OCI-LY7 (cell line): ENCODE measurements at regions of chr3 and their contacts with region 1.

Region 1: GRCh38 chr3:195337747-195338146 is 66.8 kb upstream of the XXYLT1 start:
- DNase-seq: no peak
- H3K4me3 ChIP-seq: no peak overlapping the region
- H3K27ac ChIP-seq: no peak overlapping the region
- H3K4me1 ChIP-seq: no peaks in the 10 kb centered on the region
- CTCF ChIP-seq: no peak

Region 2: GRCh38 chr3:195385526-195385925 is 47.8 kb after region 1 on chr3:
- CTCF ChIA-PET with region 1: no interaction called
- POLR2A ChIA-PET with region 1: no interaction called
- intact Hi-C with region 1: loop called (anchors 2 kb)
- DNase-seq: no peak
- H3K4me3 ChIP-seq: no peak overlapping the region
- H3K27ac ChIP-seq: no peak overlapping the region
- H3K4me1 ChIP-seq: no peaks in the 10 kb centered on the region
- CTCF ChIP-seq: no peak